ENCODE measurements at regions of chr20 and their contacts with region 1.

Region 1: DNA sequence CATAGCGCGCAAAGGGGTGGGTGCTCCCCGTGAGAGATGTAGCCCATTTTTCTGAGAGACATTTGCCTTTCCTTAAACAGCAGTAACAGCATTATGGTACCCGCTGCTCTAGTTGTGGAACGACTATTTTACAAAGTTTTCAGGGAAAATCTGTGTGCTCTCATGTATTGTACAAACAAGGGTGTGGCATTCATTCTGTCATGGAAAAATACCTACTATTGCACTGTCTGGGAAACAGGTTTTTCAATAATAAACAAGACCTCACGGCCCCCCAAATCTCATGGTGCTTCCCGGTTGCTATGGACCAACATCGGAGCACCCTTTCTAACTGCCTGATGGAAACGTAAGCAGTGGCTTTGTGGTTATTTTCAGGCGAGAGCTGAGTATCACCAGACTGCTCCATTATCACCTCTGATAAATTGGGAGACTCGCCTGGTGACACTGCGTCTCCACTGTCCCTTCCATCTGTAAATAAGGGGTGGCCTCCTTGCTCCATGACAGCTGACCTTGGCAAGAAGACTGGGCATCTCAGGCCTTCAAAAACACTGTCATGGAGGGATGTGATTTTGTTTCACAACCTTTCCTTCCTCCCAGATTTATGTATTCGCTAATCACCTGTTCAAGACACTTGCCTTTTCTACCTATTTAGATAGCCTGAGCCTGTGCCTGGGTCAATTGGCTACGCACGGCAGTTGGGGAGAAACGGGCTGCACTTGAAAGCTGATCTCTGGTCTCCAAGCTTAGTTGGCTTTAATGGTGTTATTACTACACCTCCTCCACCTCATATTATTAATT is 17.9 kb upstream of the CDH4 start:
- DNase-seq: no peak
- ATAC-seq: no peak
- H3K4me3 Mint-ChIP-seq: no peak overlapping the region
- H3K27ac Mint-ChIP-seq: no peak overlapping the region
- H3K4me1 Mint-ChIP-seq: no peaks in the 10 kb centered on the region
- H3K27me3 Mint-ChIP-seq: peaks cover 4% of the 10 kb centered on the region
- CTCF ChIP-seq: no peak

Region 2: GRCh38 chr20:61099806-61100205 is 134.4 kb before region 1 on chr20:
- CTCF ChIA-PET with region 1: no interaction called
- POLR2A ChIA-PET with region 1: no interaction called
- intact Hi-C with region 1: no loop called
- DNase-seq: no peak
- ATAC-seq: no peak
- H3K4me3 Mint-ChIP-seq: no peak overlapping the region
- H3K27ac Mint-ChIP-seq: no peak overlapping the region
- H3K4me1 Mint-ChIP-seq: no peaks in the 10 kb centered on the region
- H3K27me3 Mint-ChIP-seq: no peaks in the 10 kb centered on the region
- CTCF ChIP-seq: no peak

Region 3: DNA sequence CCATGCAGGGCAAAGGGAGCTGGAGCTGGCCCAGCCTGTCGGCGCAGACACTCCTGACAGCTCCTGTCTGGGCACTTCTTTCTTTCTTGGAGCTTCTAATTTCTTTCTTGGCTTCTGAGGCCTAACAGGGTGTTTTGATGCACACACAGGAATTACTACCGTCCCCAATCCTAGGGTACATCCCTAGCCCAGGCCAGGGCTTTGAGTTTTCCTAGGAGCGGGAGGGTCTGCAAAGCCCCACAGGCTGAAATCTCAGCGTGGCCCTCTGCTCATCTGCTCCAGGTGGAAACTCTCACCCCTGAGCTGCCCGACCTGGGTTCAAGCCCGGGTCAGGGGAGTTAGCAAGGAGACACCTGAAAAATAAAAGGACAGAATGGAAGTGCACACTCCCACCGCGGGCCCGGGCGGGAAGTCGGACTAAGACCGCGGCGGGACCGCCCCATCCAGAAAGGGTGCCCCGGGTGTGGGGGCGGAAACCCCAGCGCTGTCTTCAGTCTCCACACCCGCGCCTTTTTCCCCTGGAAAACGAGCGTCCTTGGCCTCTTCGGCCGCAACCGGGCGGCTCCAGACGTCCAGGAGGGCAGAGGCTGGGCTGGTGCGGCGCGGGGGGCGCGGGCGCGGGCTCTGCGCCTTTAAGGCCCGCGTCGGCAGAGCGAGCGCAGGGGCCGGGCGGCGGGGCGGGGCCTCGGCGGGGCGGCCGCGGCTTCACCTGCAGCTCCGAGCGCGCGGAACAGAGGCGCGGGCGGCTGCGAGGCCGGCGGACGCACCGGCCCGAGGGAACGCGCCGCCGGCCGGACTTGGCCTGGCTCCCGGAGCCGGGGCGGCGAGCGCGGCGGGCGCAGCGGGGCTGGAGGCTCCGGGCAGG is 17.6 kb after region 1 on chr20 and contains the start of gene CDH4:
- CTCF ChIA-PET with region 1: interaction called, 12 read pairs
- POLR2A ChIA-PET with region 1: no interaction called
- intact Hi-C with region 1: no loop called
- DNase-seq: no peak
- ATAC-seq: no peak
- H3K4me3 Mint-ChIP-seq: no peak within 1 kb of the TSS
- H3K27ac Mint-ChIP-seq: no peak within 1 kb of the TSS
- H3K4me1 Mint-ChIP-seq: no peaks in the 10 kb centered on the region
- H3K27me3 Mint-ChIP-seq: peaks cover 43% of the 10 kb centered on the region
- CTCF ChIP-seq: no peak
- total RNA-seq, gene CDH4: 0.11 to 0.18 TPM

Region 4: DNA sequence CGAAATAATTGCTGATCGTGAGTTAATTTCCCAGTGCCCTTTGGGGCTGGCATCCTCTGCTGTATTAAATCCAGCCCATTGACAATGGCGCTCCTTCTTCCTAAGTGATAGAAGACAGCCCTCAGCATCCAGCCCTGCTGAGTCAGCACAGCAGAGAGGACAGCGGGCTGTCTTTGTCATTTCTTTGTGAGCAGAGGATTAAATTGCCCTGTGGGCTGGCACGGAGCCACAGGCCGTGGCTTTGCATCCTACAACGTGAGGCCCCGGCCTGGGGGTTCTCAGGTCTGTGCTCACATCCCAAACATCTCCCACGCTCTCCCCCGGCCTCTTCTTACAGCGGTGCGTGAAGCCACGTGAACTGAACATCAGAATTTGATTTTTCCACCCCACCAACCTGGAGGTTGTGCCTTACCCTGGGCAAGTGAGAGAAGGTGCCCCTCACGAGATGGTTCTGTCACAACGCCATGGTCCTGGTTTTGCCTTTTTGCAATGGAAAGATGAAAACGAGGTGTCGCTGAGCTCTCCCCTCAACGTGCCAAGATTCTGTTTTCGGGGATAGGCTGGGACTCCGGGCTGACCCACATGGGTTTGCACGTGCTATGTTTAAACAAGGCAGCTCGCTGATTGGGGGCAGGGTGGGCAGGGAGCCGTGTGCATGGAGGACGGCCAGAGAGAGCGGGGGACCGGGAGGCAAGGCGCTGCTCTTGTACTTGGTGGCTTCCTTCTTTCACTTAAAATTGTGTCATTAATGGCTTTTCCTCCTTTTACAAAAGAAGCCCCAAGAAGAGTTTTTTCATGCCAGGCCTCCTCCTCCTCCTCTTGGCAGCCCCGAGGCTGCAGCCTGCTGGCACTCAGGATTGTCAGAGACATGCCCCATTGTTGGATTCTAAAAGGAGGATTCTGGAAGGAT is 37.4 kb after region 1 on chr20:
- CTCF ChIA-PET with region 1: no interaction called
- POLR2A ChIA-PET with region 1: no interaction called
- intact Hi-C with region 1: no loop called
- DNase-seq: no peak
- ATAC-seq: no peak
- H3K4me3 Mint-ChIP-seq: no peak overlapping the region
- H3K27ac Mint-ChIP-seq: no peak overlapping the region
- H3K4me1 Mint-ChIP-seq: no peaks in the 10 kb centered on the region
- H3K27me3 Mint-ChIP-seq: peaks cover 2% of the 10 kb centered on the region
- CTCF ChIP-seq: no peak